ENCODE measurements at regions of chr2 and their contacts with region 1.

Region 1: GRCh38 chr2:84999553-84999955 is 28.6 kb downstream of the KCMF1 start:
- DNase-seq: no peak
- H3K4me3 Mint-ChIP-seq: no peak overlapping the region
- H3K27ac Mint-ChIP-seq: peak overlapping the region; percentile 91
- H3K4me1 Mint-ChIP-seq: peaks cover 77% of the 10 kb centered on the region
- H3K27me3 Mint-ChIP-seq: no peaks in the 10 kb centered on the region

Region 2: GRCh38 chr2:84306361-84306760 is 693.2 kb before region 1 on chr2:
- CTCF ChIA-PET with region 1: no interaction called
- POLR2A ChIA-PET with region 1: no interaction called
- intact Hi-C with region 1: no loop called
- DNase-seq: no peak
- H3K4me3 Mint-ChIP-seq: no peak overlapping the region
- H3K27ac Mint-ChIP-seq: no peak overlapping the region
- H3K4me1 Mint-ChIP-seq: no peaks in the 10 kb centered on the region
- H3K27me3 Mint-ChIP-seq: peaks cover 8% of the 10 kb centered on the region

Region 3: DNA sequence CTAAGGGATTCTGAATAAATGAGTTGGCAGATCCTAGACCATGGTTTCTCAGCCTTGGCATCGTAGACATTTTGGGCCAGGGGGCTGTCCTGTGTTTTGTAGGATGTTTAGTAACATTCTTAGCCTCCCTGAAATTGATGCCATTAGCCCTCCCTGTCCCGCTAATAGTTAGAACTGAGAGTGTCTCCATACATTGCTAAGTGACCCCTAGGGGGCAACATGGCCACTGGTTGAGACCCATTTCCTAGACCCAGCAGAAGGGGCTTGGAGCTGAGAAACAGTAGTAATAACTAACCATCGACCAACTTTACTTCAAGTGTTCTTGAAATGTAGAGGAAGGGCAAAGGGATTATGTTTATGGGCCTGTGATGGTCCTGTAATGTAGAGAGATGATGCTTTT is 12.2 kb after region 1 on chr2:
- CTCF ChIA-PET with region 1: interaction called, 6 read pairs
- POLR2A ChIA-PET with region 1: interaction called, 4 read pairs
- intact Hi-C with region 1: loop called (anchors 1 kb)
- DNase-seq: no peak
- H3K4me3 Mint-ChIP-seq: no peak overlapping the region
- H3K27ac Mint-ChIP-seq: peak overlapping the region; percentile 73
- H3K4me1 Mint-ChIP-seq: peaks cover 83% of the 10 kb centered on the region
- H3K27me3 Mint-ChIP-seq: no peaks in the 10 kb centered on the region

Measured in activated CD4-positive, alpha-beta memory T cell treated with anti-CD3 and anti-CD28 coated beads for 36 hours (primary cell).